Heart right ventricle (tissue), 16 donors: ENCODE measurements at regions of chr1 and their contacts with region 1.

Region 1: GRCh38 chr1:19081218-19081893 is 124.9 kb upstream of the IFFO2 start:
- DNase-seq: peak in 1 of 2 donors; percentile 57
- ATAC-seq: peak in 7 of 8 donors; percentile 42 to 83 (median 62)
- H3K4me3 ChIP-seq: peak overlapping the region in 6 of 10 donors; percentile 8 to 38 (median 30)
- H3K27ac ChIP-seq: peak overlapping the region in 9 of 10 donors; percentile 46 to 85 (median 67)
- H3K4me1 ChIP-seq: peaks cover 4 to 41% (median 10%) of the 10 kb centered on the region in 9 donors
- H3K27me3 ChIP-seq: no peaks in the 10 kb centered on the region
- CTCF ChIP-seq: no peak

Region 2: DNA sequence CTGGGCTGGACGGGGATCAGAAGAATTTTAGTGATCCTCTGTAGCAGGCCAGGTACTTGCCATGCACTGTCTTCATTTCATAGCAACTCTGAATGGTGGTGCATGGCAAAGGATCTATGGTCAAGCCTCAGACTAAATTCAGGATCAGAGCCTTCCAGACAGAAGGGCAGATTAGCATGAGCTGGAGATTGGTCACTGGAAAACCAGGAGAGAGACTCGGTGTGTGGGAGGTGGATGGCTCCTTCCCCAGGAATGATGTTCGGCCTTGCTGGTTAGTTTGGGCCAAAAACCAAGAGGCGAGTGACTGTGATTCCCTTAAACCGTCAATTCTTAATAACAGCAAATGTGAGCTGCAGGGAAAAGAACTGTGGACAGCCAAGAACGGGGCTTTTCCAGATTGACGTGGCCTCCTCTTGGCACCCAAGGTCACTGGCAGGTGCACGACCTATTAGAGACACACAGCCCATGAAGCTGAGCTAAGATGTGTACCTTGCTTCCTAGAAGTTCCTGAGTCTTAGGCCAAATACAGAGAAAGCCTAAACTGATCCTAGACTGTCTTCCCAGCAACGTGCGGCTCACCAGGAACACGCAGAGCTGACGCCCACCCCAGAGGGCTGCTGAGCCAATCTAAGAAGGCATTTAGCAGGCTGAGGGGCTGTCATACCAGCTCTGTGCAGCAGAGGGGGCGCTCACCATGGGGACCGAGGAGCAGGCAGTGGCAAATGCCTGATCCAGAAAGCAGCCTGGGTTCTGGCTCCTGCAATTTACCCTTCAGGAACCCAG is 197.5 kb before region 1 on chr1:
- intact Hi-C with region 1: loop called in 1 of 10 experiments (anchors 10 kb)
- DNase-seq: peak; percentile 76 to 80
- ATAC-seq: peak; percentile 46 to 80 (median 72)
- H3K4me3 ChIP-seq: no peak overlapping the region
- H3K27ac ChIP-seq: no peak overlapping the region
- H3K4me1 ChIP-seq: peaks cover 0 to 11% (median 0%) of the 10 kb centered on the region in 9 donors
- H3K27me3 ChIP-seq: no peaks in the 10 kb centered on the region
- CTCF ChIP-seq: peak; percentile 86 to 96 (median 92)

Region 3: DNA sequence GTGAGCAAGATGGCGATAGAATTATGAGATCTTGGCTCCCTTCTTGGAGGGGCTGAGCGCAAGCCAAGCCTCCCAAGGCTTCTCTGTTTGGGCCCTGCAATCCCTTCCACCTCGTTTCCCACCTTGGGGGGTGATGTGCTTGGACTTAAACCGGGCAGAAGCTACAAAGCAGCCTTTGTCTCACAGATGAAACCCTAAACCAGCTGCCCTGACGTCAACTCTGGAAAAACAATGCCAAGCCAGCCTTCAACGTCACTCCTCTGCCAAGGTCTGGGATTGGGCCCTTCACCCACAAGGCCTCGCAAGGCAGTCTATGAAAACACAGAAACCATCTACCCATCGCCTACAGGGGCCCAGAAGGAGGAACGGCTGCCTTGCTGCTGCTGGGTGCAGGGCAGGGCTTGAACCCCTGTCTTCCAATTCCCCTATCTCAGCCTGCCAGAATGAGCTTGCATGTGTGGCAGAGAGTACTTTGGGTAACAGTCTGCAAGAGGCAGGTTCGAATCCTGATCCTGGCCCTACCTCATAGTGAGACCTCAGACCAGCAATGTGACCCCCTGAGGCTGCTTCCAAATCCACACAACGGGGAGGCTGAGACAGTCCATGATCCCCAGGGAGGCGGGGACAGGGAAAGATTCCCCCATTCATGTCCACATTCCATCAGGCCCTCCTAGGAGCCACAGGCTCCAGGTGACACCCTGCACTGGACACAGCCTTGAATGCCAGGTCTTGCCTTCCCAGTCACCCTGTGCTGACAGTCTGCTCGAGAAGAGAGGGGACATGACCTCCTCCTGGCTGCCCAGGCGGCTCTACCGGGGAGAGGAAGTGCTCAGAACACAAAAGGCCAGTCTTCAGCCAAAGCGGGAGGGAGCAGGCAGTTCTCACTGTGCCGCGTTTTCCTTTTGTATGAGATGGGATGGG is 139.9 kb before region 1 on chr1:
- intact Hi-C with region 1: no loop called
- DNase-seq: peak in 1 of 2 donors; percentile 56
- ATAC-seq: peak in 7 of 8 donors; percentile 42 to 80 (median 78)
- H3K4me3 ChIP-seq: no peak overlapping the region
- H3K27ac ChIP-seq: peak overlapping the region; percentile 14 to 82 (median 66)
- H3K4me1 ChIP-seq: peaks cover 36 to 85% (median 66%) of the 10 kb centered on the region in 9 donors
- H3K27me3 ChIP-seq: no peaks in the 10 kb centered on the region
- CTCF ChIP-seq: no peak

Region 4: DNA sequence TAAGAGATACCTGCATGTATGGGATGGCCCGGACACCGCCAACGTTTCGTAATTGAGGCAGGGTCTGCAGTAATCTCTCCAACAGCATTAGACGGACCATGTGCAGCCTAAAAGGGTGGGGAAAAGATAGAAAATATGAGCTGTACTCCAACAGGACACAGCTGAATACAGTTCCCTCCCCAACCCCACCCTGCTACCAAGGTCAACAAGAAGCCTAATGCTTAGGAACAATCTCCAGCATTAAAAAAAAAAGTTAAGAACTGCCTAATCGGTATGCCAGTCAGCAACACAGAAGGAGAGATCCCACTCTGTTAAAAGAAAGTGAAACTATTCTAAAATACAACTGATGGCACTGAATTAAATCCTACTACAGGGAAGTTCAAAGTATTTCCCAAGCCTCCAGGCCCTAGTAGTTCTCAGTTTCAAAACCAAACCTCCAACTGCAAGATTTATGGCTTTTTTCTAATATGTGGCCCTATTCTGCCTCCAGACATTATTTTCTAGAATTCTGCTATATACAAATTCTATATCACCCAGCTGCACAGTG is 47.7 kb after region 1 on chr1:
- intact Hi-C with region 1: no loop called
- DNase-seq: no peak
- ATAC-seq: peak in 1 of 8 donors; percentile 21
- H3K4me3 ChIP-seq: no peak overlapping the region
- H3K27ac ChIP-seq: peak overlapping the region in 1 of 10 donors; percentile 22
- H3K4me1 ChIP-seq: peaks cover 0 to 26% (median 4%) of the 10 kb centered on the region in 9 donors
- H3K27me3 ChIP-seq: no peaks in the 10 kb centered on the region
- CTCF ChIP-seq: no peak